Aorta (tissue), 5 donors: ENCODE measurements at regions of chr3 and their contacts with region 1.

Region 1: DNA sequence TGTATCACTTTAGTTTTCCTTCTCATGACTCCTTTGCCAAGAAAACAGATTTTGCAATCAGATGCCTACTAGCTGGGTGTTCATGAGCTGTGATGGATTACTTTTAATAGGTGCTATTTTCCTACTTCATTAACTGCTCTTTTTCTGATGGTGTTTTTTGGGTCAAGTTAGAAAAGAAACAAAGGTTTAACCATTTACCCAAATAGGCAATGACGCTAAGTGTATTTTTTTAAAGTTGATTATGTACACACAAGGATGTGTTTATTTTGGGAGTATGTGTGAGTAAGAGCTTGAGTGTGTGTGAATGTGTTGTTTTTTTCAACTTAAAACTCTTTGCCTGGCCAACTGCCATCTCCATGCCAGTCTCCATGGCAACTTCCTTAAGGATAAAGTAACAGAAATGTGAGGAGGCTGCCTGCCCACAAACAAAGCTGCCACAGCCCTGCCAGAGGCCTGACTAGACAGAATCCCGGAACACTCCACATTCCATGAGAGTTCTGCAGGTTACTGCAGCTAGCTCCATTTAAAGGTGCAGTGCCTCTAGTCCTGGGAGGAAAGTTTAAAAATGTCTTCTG is 215.6 kb upstream of the RBMS3 start:
- DNase-seq: peak; percentile 92 to 93
- ATAC-seq: peak; percentile 92
- H3K4me3 ChIP-seq: no peak overlapping the region
- H3K27ac ChIP-seq: no peak overlapping the region
- H3K4me1 ChIP-seq: no peaks in the 10 kb centered on the region
- H3K27me3 ChIP-seq: no peaks in the 10 kb centered on the region

Region 2: DNA sequence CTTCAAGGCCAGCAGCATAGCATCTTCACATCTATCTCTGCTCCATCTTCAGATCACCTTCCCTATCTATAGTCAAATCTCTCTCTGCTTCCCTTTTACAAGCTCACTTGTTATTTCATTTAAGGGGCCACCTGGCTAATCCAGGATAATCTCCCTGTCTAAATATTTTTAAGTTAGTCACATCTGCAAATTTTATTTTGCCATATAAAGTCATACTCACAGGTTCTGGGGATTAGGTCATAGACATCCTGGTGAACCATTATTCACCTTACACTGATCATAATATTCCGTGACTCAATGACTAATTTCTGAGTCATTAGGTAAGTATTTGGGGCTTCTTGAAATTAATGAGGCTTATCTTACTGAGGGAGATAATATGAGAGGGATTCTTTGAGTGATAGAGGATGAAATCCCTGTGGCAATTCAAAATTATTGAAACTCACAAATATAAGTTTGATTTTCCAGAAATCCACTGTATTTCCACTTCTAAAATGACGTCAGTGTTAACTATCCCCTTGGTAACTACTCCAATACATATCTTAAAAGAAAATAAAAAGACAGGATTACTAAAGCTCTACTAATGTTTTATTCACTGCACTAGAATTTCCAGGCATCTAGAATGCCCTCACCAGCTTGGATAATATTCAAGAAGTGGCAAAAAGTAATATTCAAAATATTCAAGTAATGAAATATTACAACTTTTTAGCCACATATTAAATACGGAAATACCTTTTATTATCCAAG is 121.9 kb after region 1 on chr3:
- intact Hi-C with region 1: loop called in 1 of 2 experiments (anchors 10 kb)
- DNase-seq: no peak
- ATAC-seq: no peak
- H3K4me3 ChIP-seq: no peak overlapping the region
- H3K27ac ChIP-seq: no peak overlapping the region
- H3K4me1 ChIP-seq: peaks cover 0 to 2% of the 10 kb centered on the region in 2 donors
- H3K27me3 ChIP-seq: no peaks in the 10 kb centered on the region